ENCODE measurements at regions of chr2 and their contacts with region 1.

Region 1: GRCh38 chr2:215280326-215280725 is 31.5 kb upstream of the ATIC start:
- DNase-seq: no peak
- H3K4me3 ChIP-seq: no peak overlapping the region
- H3K4me3 Mint-ChIP-seq: no peak overlapping the region
- H3K27ac ChIP-seq: no peak overlapping the region
- H3K27ac Mint-ChIP-seq: no peak overlapping the region
- H3K4me1 ChIP-seq: no peaks in the 10 kb centered on the region
- H3K4me1 Mint-ChIP-seq: no peaks in the 10 kb centered on the region
- H3K27me3 ChIP-seq: no peaks in the 10 kb centered on the region
- H3K27me3 Mint-ChIP-seq: peaks cover 3 to 6% (median 6%) of the 10 kb centered on the region in 3 donors
- CTCF ChIP-seq: no peak

Region 2: GRCh38 chr2:215293879-215294278 is 13.6 kb after region 1 on chr2:
- intact Hi-C with region 1: loop called in 1 of 2 experiments (anchors 1 kb)
- DNase-seq: no peak
- H3K4me3 ChIP-seq: no peak overlapping the region
- H3K4me3 Mint-ChIP-seq: no peak overlapping the region
- H3K27ac ChIP-seq: no peak overlapping the region
- H3K27ac Mint-ChIP-seq: no peak overlapping the region
- H3K4me1 ChIP-seq: no peaks in the 10 kb centered on the region
- H3K4me1 Mint-ChIP-seq: no peaks in the 10 kb centered on the region
- H3K27me3 ChIP-seq: no peaks in the 10 kb centered on the region
- H3K27me3 Mint-ChIP-seq: peaks cover 0 to 1% (median 0%) of the 10 kb centered on the region in 3 donors
- CTCF ChIP-seq: no peak

Measured in CD14-positive monocyte (primary cell).